H1 (cell line): ENCODE measurements at regions of chr19 and their contacts with region 1.

Region 1: DNA sequence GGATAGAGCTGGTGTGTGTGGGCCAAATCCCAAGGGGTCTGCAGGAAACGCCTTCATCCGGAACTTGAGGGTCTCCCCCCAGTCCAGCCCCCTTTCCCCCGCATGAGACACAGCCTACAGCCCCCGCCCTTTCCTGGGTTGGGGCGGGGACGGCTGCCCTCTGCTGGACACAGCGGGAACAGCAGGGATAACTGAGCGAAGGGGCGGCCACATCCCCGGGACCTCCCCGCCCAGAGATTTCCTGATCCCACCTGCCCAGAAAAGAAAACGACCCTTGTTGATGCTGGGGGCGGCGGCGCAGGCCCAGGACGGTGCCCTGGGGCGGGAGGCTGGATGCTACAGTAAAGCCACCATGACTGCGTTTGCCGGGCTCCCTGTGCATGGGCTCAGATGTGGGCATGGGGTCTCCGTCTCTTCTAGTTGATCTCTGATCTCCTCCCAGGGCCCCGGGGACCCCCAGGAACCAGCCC is 14.2 kb downstream of the ONECUT3 start:
- DNase-seq: peak in 1 of 2 experiments; percentile 95
- H3K4me3 ChIP-seq: no peak overlapping the region
- H3K27ac ChIP-seq: no peak overlapping the region
- H3K4me1 ChIP-seq: peaks cover 0 to 20% (median 7%) of the 10 kb centered on the region in 4 experiments; a peak in 6 of 7 replicates
- H3K27me3 ChIP-seq: peaks cover 56 to 74% (median 68%) of the 10 kb centered on the region in 4 experiments
- CTCF ChIP-seq: peak; percentile 87 to 96 (median 89)
- EP300 ChIP-seq: no peak
- POLR2A ChIP-seq: no peak
- RAD21 ChIP-seq: peak; percentile 75

Region 2: GRCh38 chr19:1406774-1407499 is 360.6 kb before region 1 on chr19:
- CTCF ChIA-PET with region 1: no interaction called
- POLR2A ChIA-PET with region 1: no interaction called
- DNase-seq: peak; percentile 91 to 99
- H3K4me3 ChIP-seq: peak overlapping the region; percentile 49 to 71 (median 64)
- H3K27ac ChIP-seq: 0 out of 2 replicates have a peak overlapping the region, but pooled peaks have one; percentile 26
- H3K4me1 ChIP-seq: peaks cover 2 to 26% (median 17%) of the 10 kb centered on the region in 4 experiments; a peak in 6 of 7 replicates
- H3K27me3 ChIP-seq: peaks cover 0 to 2% (median 0%) of the 10 kb centered on the region in 4 experiments; a peak in 2 of 7 replicates
- CTCF ChIP-seq: peak; percentile 24 to 57 (median 36); a peak in 3 of 4 replicates
- EP300 ChIP-seq: no peak
- POLR2A ChIP-seq: no peak
- RAD21 ChIP-seq: peak; percentile 23 to 40; a peak in 3 of 4 replicates

Region 3: GRCh38 chr19:1672038-1672768 is 95.3 kb before region 1 on chr19:
- CTCF ChIA-PET with region 1: interaction called, 52 read pairs
- POLR2A ChIA-PET with region 1: interaction called, 3 read pairs
- DNase-seq: peak in 1 of 2 experiments; percentile 81
- H3K4me3 ChIP-seq: peak overlapping the region in 3 of 4 experiments; percentile 5 to 60 (median 6); a peak in 4 of 8 replicates
- H3K27ac ChIP-seq: no peak overlapping the region
- H3K4me1 ChIP-seq: peaks cover 0 to 16% (median 10%) of the 10 kb centered on the region in 4 experiments; a peak in 6 of 7 replicates
- H3K27me3 ChIP-seq: peaks cover 34 to 91% (median 80%) of the 10 kb centered on the region in 4 experiments
- CTCF ChIP-seq: peak; percentile 47 to 82 (median 80)
- EP300 ChIP-seq: no peak
- POLR2A ChIP-seq: no peak
- RAD21 ChIP-seq: peak; percentile 79 to 85

Region 4: GRCh38 chr19:1700002-1700732 is 67.3 kb before region 1 on chr19:
- CTCF ChIA-PET with region 1: no interaction called
- POLR2A ChIA-PET with region 1: no interaction called
- DNase-seq: no peak
- H3K4me3 ChIP-seq: no peak overlapping the region
- H3K27ac ChIP-seq: no peak overlapping the region
- H3K4me1 ChIP-seq: no peaks in the 10 kb centered on the region
- H3K27me3 ChIP-seq: no peaks in the 10 kb centered on the region; a peak in 1 of 7 replicates
- CTCF ChIP-seq: no peak
- EP300 ChIP-seq: no peak
- POLR2A ChIP-seq: no peak
- RAD21 ChIP-seq: no peak

Region 5: GRCh38 chr19:1747285-1748114 is 20.0 kb before region 1 on chr19:
- CTCF ChIA-PET with region 1: interaction called, 10 read pairs
- POLR2A ChIA-PET with region 1: interaction called, 21 read pairs
- DNase-seq: peak in 1 of 2 experiments; percentile 54
- H3K4me3 ChIP-seq: peak overlapping the region in 3 of 4 experiments; percentile 22 to 59 (median 34); a peak in 3 of 8 replicates
- H3K27ac ChIP-seq: no peak overlapping the region
- H3K4me1 ChIP-seq: peaks cover 0 to 46% (median 27%) of the 10 kb centered on the region in 4 experiments; a peak in 6 of 7 replicates
- H3K27me3 ChIP-seq: peaks cover 67 to 86% (median 78%) of the 10 kb centered on the region in 4 experiments
- CTCF ChIP-seq: no peak
- EP300 ChIP-seq: no peak
- POLR2A ChIP-seq: no peak
- RAD21 ChIP-seq: no peak

Region 6: DNA sequence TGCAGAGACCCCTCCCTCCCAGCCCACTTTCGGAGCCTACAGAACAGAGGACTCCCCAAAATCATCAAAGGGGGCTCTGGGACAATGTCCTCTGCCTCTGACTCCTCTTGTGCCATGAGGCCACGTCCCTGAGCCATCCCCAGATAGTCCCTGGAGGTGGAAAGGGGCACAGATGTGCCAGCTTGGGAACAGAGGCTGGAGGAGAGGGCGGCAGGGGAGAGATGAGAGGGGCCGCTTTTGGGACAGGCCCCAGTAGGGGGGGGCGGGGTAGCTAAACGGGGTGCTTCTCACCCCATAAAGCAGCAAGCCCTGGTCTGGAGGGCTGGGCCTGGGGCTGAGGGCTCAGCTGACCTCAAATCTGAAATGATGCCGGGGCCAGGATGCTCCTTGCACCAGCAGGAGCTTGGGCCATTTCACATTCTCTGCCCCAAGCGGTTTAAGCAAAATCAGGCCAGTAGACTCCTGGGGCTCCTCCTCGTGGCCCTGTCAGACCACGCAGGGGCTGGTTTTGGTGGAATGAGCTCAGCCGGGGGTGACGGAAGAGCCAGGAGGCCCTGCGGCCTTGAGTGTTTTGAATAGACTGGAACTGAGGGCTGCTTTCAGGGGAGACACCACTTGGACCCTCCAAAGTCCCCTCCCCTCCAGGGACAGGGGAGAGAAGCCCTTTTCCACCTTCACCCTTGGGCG is 12.9 kb after region 1 on chr19:
- CTCF ChIA-PET with region 1: interaction called, 97 read pairs
- POLR2A ChIA-PET with region 1: interaction called, 4 read pairs
- DNase-seq: no peak
- H3K4me3 ChIP-seq: no peak overlapping the region
- H3K27ac ChIP-seq: no peak overlapping the region
- H3K4me1 ChIP-seq: peaks cover 0 to 5% (median 2%) of the 10 kb centered on the region in 4 experiments; a peak in 3 of 7 replicates
- H3K27me3 ChIP-seq: peaks cover 22 to 57% (median 55%) of the 10 kb centered on the region in 4 experiments
- CTCF ChIP-seq: peak in 2 of 3 experiments; percentile 6 to 42; a peak in 3 of 4 replicates
- EP300 ChIP-seq: no peak
- POLR2A ChIP-seq: no peak
- RAD21 ChIP-seq: no peak

Region 7: DNA sequence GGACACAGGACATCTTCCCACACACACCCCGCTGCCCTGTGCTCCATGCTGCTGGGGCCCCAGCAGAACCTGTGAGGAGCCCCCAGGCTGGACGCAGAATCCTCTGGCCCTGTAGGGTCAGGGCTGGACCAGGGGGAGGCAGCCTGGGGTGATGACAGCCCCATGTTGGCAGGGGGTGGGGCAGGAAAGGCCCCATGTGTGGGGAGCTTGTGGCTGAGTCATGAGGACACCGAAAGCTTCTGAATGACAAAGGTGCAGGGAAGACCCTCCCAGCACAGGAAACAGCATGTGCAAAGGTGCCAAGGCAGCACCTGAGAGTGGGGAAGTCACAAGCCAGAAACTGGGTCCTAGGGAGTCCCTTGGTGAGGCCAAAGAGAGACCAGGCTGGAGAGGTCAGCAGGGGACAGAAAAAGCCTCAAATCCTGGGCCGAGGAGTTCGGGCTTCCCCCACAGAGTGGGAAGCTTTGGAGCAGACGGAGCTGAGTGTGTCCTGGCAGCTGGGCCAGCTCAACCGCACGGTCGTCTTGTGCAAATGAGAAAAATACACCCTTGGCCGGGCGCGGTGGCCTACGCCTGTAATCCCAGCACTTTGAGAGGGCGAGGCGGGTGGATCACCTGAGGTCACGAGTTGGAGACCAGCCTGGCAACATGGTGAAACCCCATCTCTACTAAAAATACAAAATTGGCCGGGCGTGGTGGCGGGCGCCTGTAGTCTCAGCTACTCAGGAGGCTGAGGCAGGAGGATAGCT is 27.1 kb after region 1 on chr19:
- CTCF ChIA-PET with region 1: interaction called, 76 read pairs
- POLR2A ChIA-PET with region 1: interaction called, 4 read pairs
- DNase-seq: peak in 1 of 2 experiments; percentile 39
- H3K4me3 ChIP-seq: no peak overlapping the region
- H3K27ac ChIP-seq: no peak overlapping the region
- H3K4me1 ChIP-seq: peaks cover 0 to 15% (median 8%) of the 10 kb centered on the region in 4 experiments; a peak in 5 of 7 replicates
- H3K27me3 ChIP-seq: peaks cover 0 to 4% (median under 1%) of the 10 kb centered on the region in 4 experiments; a peak in 2 of 7 replicates
- CTCF ChIP-seq: peak in 2 of 3 experiments; percentile 7 to 15; a peak in 2 of 4 replicates
- EP300 ChIP-seq: no peak
- POLR2A ChIP-seq: no peak
- RAD21 ChIP-seq: no peak; a peak in 1 of 4 replicates

Region 8: DNA sequence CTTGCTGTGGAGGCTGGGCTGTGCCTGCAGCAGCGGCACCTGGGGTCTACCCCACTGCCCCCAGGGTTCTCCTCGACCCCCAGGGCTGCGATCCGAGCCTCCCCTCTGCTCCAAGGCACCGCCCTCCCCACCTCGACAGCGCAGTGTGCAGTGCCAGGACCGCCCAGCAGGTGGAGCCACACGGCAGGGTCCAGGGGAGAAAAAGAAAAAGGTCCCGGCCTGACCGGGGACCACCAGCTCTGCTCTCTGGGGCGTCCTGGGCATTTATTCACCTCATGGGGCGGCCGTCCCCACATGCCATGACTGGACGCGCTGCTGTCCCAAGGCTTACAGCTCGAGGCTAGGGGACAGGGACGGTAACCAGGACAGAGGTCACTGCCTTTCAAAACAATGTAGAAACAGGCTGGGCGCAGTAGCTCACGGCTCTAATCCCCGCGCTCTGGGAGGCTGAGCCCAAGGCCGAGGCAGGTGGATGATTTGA is 70.2 kb after region 1 on chr19:
- CTCF ChIA-PET with region 1: interaction called, 11 read pairs
- POLR2A ChIA-PET with region 1: no interaction called
- DNase-seq: peak in 1 of 2 experiments; percentile 98
- H3K4me3 ChIP-seq: no peak overlapping the region
- H3K27ac ChIP-seq: no peak overlapping the region
- H3K4me1 ChIP-seq: 0 out of 7 replicates have a peak, but pooled peaks cover 0 to 2% (median 0%) of the 10 kb centered on the region in 4 experiments
- H3K27me3 ChIP-seq: no peaks in the 10 kb centered on the region
- CTCF ChIP-seq: peak; percentile 89 to 94 (median 91)
- EP300 ChIP-seq: no peak
- POLR2A ChIP-seq: no peak
- RAD21 ChIP-seq: peak; percentile 41 to 62; a peak in 3 of 4 replicates

Region 9: GRCh38 chr19:1907563-1908363 is 140.3 kb after region 1 on chr19:
- CTCF ChIA-PET with region 1: no interaction called
- POLR2A ChIA-PET with region 1: no interaction called
- DNase-seq: no peak
- H3K4me3 ChIP-seq: no peak overlapping the region
- H3K27ac ChIP-seq: no peak overlapping the region
- H3K4me1 ChIP-seq: peaks cover 0 to 9% (median 8%) of the 10 kb centered on the region in 4 experiments; a peak in 5 of 7 replicates
- H3K27me3 ChIP-seq: no peaks in the 10 kb centered on the region
- CTCF ChIP-seq: no peak
- EP300 ChIP-seq: no peak
- POLR2A ChIP-seq: no peak
- RAD21 ChIP-seq: no peak

Region 10: DNA sequence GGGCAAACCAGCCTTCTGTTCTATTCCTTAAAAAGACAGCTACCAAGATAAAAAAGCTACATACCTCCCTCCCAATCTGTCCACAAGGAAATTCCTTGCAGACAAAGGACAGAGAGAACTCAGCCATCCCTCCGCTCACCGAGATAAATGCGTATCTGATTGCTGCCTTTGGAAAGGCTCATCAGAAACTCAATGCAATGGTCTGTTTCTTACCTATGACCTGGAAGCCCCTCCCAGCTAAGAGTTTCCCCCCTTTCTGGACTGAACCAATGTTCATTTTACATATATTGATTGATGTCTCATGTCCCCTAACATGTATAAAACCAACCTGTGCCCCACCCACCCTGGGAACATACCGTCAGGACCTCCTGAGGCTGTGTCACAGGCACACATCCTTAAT is 236.4 kb after region 1 on chr19:
- CTCF ChIA-PET with region 1: no interaction called
- POLR2A ChIA-PET with region 1: no interaction called
- DNase-seq: no peak
- H3K4me3 ChIP-seq: no peak overlapping the region
- H3K27ac ChIP-seq: no peak overlapping the region
- H3K4me1 ChIP-seq: no peaks in the 10 kb centered on the region
- H3K27me3 ChIP-seq: peaks cover 0 to 2% (median 0%) of the 10 kb centered on the region in 4 experiments; a peak in 1 of 7 replicates
- CTCF ChIP-seq: no peak
- EP300 ChIP-seq: no peak
- POLR2A ChIP-seq: no peak
- RAD21 ChIP-seq: no peak